RWPE1 (cell line): ENCODE measurements at regions of chr5 and their contacts with region 1.

Region 1: DNA sequence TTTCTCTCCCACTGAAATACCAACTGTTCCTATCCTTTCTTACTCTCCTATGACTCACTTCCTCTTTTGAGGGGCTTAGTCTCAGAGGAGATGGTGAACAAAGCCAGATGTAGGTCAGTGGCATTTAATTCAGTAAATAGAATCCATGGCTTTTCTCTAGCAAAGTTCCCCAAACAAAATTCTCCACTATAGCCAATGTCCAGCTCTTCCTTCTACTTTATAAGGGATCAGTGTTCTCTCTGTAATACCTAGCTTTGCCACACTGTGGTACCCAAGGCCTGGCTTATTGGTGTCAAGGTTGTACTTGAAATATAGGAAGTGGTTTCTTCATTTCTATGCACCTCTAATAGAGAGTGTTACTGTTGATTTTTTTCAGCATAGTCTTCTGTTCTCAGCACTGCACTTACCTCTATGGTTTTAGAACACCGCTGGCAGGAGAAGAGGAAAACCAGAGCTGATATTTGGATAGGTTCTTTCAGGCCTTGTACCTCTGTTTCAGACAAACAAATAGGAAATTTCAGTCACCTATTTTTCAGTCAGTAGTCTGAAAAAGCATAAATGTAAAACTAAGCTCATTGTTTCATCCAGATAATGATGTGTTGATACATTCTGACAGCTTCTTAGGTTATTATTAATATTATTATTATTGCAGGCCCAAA is 40.6 kb upstream of the ITGA2 start:
- DNase-seq: peak; percentile 80
- H3K27ac ChIP-seq: no peak overlapping the region
- CTCF ChIP-seq: peak; percentile 93

Region 2: DNA sequence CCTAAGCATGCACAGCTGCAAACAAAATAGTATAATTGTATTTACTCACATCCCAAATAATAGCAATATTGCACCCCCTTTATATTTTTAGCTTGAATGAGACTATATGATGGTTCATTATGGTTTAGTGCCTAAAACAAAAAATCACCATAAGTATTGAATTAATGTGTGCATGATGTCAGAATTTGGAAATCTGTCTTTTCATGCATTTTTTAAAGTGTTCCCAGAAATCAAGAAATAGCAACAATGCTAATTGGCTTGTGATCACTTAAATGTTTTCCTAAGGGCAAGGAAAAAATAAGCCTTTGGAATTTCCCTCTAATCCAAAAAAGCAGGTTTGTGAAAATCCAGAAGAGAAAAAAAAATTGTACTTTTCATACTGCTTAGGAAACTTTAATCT is 10.3 kb before region 1 on chr5:
- CTCF ChIA-PET with region 1: interaction called, 10 read pairs
- POLR2A ChIA-PET with region 1: no interaction called
- DNase-seq: no peak
- H3K27ac ChIP-seq: no peak overlapping the region
- CTCF ChIP-seq: no peak

Region 3: GRCh38 chr5:52989781-52990527 is 41.4 kb after region 1 on chr5:
- CTCF ChIA-PET with region 1: interaction called, 43 read pairs
- POLR2A ChIA-PET with region 1: interaction called, 5 read pairs
- DNase-seq: peak; percentile 60
- H3K27ac ChIP-seq: peak overlapping the region; percentile 90
- CTCF ChIP-seq: peak; percentile 74

Region 4: GRCh38 chr5:53027913-53028312 is 79.4 kb after region 1 on chr5:
- CTCF ChIA-PET with region 1: interaction called, 11 read pairs
- POLR2A ChIA-PET with region 1: no interaction called
- DNase-seq: peak; percentile 91
- H3K27ac ChIP-seq: peak overlapping the region; percentile 90
- CTCF ChIP-seq: no peak

Region 5: DNA sequence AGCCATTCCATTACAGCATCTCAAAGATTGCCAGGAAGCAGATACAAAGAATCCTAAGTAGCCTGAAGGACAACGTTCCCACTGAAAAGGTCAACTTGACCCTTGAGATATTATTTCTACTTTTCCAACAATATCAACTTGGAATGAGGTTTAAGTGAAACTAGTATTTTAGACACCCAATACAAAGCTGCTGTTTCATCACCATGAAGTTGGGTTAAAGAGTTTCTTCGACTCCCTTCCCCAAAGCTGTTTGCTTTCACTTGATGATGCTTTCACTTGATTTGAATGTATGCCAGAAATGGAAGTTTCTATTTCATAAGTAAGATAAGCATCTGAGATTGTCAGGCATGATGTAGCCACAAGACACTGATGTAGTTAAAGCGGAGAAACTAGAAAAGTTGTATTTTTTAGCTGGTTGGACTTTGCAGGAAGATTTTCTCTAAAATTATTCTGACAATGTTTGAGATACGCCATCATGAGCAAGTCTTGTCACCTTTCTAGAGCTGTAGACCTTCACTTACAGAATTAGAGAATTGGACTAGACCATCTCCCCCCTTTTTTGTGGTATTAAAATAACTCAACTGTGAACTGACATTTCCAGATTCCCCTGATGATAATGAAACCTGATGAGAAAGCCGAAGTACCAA is 140.9 kb after region 1 on chr5:
- CTCF ChIA-PET with region 1: interaction called, 40 read pairs
- POLR2A ChIA-PET with region 1: interaction called, 3 read pairs
- DNase-seq: no peak
- H3K27ac ChIP-seq: no peak overlapping the region
- CTCF ChIP-seq: no peak

Region 6: DNA sequence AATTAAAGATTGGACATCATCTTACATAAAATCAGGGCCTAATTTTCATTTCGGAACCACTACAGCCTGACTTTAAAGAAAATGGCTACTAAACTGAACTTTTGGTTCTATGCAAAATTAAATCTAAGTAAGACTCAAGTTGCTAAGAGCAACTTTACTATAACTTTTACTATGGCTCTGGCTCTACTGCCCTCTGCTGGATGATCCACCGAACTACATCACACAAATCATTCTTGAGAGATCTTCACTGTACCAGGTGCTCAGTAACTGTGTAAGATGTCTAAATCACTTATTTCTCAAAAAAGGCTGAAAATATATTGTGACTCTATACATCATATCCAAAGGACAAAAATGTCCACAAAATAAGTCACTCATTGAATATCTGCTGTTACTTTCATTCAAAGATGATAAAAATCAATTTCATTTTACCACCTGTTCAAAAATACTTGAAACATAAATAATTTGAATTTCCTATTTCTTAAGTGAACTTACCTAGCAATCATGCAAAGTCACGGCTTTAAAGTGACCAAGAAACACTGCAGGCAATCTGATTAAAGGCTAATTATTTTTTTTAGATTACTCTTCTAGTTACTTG is 147.5 kb after region 1 on chr5:
- CTCF ChIA-PET with region 1: interaction called, 40 read pairs
- POLR2A ChIA-PET with region 1: no interaction called
- DNase-seq: peak; percentile 65
- H3K27ac ChIP-seq: no peak overlapping the region
- CTCF ChIP-seq: peak; percentile 94